Activated CD4-positive, alpha-beta memory T cell treated with anti-CD3 and anti-CD28 coated beads, Interleukin-2, amount 10 ng/mL, durations not matched to agents 7 days and 5 days (primary cell): ENCODE measurements at regions of chr11 and their contacts with region 1.

Region 1: DNA sequence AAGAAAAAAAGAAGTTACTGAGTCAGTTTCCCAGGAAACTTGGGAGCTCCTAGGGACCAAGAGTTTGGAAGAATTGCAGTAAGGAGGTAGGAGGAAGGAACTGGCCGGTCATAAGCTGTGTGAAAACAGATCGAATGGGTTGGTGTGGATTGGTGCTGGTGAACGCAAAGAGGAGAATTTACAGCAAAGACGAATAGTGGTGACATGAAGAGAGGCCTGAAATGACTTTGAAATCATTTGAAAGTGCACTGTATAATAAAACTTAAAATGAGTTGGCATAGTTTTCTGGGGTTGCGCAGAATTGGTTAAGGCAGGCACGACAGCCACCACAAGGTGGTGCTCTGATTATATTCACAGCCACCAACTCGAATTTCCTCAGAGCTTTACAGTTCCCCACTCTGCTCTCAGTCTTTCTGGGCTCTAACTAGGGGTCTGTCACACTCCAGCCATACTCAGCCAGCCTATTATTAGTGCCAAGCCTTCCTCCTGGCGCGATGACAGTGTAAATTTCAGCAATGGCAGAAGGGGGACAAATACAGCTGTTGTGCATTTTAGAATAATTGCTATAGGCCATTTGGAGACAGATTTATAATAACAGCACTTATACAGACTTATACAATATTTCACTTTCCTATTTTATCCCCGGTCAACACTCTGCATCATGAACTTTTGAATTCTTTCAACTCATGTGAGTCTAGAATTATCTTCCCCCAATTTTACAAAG is 8.3 kb upstream of the HTR3B start:
- DNase-seq: peak; percentile 48
- H3K4me3 Mint-ChIP-seq: no peak overlapping the region
- H3K27ac Mint-ChIP-seq: no peak overlapping the region
- H3K4me1 Mint-ChIP-seq: peaks cover 6% of the 10 kb centered on the region
- H3K27me3 Mint-ChIP-seq: peaks cover 3% of the 10 kb centered on the region

Region 2: DNA sequence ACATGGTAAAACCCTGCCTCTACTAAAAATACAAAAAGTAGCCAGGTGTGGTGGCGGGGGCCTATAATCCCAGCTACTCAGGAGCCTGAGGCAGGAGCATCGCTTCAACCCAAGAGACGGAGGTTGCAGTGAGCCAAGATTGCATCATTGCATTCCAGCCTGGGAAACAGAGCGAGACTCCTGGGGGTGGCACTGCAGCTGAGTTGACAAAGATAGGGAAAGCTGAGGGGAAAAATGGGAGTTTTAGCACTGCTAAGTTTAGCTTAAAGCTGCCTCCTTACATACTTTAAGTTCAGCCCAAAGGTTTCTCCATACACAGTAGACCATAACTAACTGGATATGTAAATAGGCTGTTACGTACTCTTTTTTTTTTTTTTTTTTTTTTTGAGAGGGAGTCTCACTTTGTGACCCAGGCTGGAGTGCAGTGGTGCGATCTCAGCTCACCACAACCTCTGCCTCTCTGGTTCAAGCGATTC is 11.9 kb before region 1 on chr11:
- CTCF ChIA-PET with region 1: interaction called, 16 read pairs
- POLR2A ChIA-PET with region 1: no interaction called
- DNase-seq: no peak
- H3K4me3 Mint-ChIP-seq: no peak overlapping the region
- H3K27ac Mint-ChIP-seq: no peak overlapping the region
- H3K4me1 Mint-ChIP-seq: no peaks in the 10 kb centered on the region
- H3K27me3 Mint-ChIP-seq: peaks cover 3% of the 10 kb centered on the region

Region 3: DNA sequence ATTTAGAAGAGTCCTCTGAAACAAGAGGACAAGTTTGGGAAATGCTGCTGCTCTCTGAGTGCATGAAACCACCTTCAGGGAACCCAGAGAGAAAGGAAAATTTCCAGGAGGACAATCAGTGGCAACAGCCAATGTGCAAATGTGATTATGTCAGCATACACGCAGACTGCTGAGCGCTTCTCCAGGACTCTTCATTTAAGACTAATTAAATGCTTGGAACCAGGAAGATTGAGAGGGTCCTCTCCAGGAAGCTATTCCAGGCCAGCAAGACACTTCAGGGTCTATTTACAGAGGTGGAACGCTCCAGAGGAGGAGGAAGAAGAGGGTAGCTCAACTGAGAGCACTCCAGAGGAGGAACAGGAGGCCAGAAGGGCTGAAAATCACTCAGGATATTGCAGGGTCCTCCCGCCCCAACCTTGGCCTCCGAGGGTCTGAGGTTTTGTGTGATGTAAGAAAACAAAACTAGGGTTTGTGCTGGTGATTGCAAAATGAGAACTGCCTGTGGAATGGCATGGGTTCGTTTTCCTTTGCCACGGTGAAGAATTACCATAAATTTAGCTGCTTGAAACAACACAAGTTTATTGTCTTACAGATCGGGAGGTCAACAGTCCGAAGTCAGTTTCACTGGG is 64.5 kb after region 1 on chr11:
- CTCF ChIA-PET with region 1: no interaction called
- POLR2A ChIA-PET with region 1: no interaction called
- DNase-seq: no peak
- H3K4me3 Mint-ChIP-seq: no peak overlapping the region
- H3K27ac Mint-ChIP-seq: no peak overlapping the region
- H3K4me1 Mint-ChIP-seq: no peaks in the 10 kb centered on the region
- H3K27me3 Mint-ChIP-seq: no peaks in the 10 kb centered on the region

Region 4: DNA sequence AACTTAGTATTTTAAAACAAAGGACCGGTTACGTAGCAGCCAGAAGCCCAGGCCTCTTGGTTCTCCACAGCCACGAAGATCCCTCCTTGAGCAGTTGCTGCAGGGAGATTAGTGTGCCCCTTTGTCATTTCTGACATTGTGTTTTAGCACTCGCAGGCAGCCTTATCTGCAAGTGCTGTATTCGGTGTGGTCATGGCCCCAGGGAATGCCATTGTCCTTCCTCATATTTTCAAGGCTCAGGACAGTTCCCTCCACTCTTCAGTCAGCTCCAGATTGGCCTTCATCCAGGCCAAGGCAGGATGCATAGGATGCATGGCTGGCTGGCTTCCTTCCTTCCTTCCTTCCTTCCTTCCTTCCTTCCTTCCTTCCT is 251.7 kb after region 1 on chr11:
- CTCF ChIA-PET with region 1: no interaction called
- POLR2A ChIA-PET with region 1: no interaction called
- DNase-seq: no peak
- H3K4me3 Mint-ChIP-seq: no peak overlapping the region
- H3K27ac Mint-ChIP-seq: no peak overlapping the region
- H3K4me1 Mint-ChIP-seq: peaks cover 31% of the 10 kb centered on the region
- H3K27me3 Mint-ChIP-seq: peaks cover 14% of the 10 kb centered on the region